ENCODE measurements at regions of chr17 and their contacts with region 1.

Region 1: DNA sequence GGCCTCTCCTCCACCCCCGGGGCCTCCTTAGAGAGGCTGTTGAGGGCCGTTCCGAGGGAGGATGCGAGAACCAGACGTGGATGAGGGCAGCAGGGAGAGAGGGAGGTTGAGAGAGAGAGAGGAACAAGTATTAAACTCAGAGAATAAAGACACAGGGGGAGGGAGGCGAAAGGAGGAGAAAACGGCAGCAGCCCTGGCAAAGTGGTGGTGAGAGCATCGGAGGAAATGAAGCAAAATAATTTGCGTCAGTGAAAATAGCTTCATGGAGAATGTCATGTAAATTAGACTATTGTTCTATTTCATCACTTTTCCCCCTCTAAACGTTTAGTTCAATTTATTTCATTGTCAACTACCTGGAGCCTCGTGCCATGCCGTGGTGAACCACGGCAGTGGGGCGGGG is 38.0 kb downstream of the PIPOX start:
- DNase-seq: no peak
- ATAC-seq: no peak
- H3K4me3 ChIP-seq: no peak overlapping the region
- H3K27ac ChIP-seq: no peak overlapping the region
- H3K4me1 ChIP-seq: peaks cover 3 to 27% (median 14%) of the 10 kb centered on the region in 9 donors
- H3K27me3 ChIP-seq: no peaks in the 10 kb centered on the region
- CTCF ChIP-seq: no peak

Region 2: DNA sequence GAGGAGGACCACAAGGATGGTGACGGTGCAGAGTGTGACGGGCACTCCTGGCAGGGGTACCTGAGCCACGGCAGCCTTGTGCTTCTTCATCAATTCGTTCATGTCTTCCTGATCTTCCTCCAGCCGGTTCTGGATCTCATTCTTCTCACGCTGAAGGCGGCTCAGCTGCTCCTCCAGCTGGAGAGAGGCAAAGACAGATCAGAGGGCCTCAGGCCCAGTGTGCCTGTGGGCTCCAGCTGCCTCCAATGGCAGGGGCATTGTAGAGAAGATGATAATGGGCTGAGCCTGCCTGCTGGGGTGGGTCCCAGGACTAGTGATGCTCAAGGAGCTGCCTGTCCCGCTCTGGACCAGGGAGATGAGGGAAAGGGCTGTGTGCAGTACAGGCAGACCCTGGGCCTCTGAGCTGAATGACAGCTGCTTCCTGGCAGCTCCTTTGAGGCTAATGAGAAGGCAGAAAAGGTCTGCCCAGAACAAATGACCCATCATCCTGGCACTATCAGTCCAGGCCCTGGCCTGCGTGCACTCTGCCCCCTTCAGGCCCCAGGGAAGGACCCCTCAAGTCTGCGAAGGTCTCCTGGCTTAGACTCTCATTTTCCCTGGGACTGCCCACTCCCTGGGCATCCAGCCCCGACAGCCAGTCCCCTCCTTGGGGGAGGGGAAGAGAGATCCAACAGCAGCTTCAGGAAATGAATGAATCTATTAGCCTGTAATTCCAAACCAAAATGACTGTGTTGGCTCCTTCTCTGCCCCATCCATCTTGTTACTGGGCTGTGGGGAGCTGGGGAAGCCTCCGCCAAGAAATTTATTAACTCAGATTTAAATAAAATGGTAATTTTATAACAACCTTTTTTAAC is 10.0 kb after region 1 on chr17:
- intact Hi-C with region 1: loop called in 1 of 10 experiments (anchors 1 kb)
- DNase-seq: no peak
- ATAC-seq: no peak
- H3K4me3 ChIP-seq: no peak overlapping the region
- H3K27ac ChIP-seq: no peak overlapping the region
- H3K4me1 ChIP-seq: peaks cover 0 to 15% (median 0%) of the 10 kb centered on the region in 9 donors
- H3K27me3 ChIP-seq: no peaks in the 10 kb centered on the region
- CTCF ChIP-seq: no peak

Region 3: GRCh38 chr17:29469276-29469675 is 388.3 kb after region 1 on chr17:
- intact Hi-C with region 1: no loop called
- DNase-seq: no peak
- ATAC-seq: no peak
- H3K4me3 ChIP-seq: no peak overlapping the region
- H3K27ac ChIP-seq: no peak overlapping the region
- H3K4me1 ChIP-seq: no peaks in the 10 kb centered on the region
- H3K27me3 ChIP-seq: no peaks in the 10 kb centered on the region
- CTCF ChIP-seq: no peak

Measured in heart right ventricle (tissue), 16 donors.